GM10248 (cell line): ENCODE measurements at regions of chr21 and their contacts with region 1.

Region 1: DNA sequence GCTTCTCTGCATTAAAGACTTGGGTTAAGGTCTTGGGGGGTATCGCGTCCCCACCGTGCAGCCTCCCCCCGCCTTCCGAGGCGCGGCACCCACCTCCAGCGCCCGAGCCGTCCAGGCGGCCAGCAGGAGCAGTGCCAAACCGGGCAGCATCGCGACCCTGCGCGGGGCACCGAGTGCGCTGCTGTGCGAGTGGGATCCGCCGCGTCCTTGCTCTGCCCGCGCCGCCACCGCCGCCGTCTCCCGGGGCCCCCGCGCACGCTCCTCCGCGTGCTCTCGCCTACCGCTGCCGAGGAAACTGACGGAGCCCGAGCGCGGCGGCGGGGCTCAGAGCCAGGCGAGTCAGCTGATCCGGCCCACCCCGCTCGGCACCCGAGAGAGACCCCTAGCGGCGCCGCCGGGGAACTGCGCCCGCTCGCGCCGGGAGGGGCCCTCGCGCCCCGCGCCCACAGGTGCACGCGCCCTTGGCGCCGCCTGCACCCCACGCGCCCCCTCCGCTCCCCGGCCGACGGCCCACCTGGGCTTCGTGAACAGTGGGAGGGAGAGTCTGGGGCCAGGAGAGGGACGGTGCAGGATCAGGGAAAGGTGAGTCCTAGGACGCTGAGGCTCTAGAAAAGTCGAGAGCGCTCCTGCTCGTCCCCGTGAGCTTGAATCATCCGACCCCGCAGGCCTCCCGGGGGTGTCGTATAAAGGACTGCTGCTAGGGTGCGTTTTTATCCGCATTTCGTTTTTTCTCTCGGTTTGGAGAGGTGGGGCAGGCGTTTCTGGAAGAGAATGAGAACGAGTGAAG is at the start of gene APP:
- DNase-seq: peak; percentile 95
- CTCF ChIP-seq: peak; percentile 91

Region 2: DNA sequence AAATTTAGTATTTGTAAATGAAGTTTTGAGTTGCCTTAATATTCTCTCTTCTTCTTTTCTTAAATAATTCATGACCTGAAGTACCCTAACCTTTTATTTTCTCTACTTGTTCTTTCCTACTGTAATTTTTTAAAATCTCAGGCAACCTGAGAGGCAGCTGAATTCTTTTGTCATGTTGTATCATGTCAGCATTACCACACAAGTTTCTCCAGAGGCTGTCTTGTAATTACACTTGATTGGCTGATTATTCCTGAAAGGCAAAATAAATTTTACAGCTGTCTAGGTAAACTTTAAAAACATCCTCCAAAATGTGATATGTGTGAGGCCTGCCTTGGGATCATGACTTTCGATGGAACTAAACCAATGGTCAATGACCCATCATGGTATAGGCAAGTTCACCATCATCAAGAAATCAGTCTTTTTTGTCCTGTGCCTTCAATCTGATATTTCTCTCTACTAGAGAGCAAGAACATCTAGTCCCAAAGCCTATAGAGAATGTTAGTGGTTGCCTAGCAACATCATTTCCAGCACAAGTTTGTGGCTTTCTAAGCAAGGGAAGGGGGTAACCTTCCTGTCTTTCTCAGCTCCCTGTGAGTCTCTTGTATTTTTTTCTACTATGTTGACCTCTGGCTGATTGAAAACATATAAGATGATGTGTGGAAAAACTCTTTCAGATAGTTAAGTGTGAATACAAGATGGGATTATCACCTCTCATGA is 320.4 kb before region 1 on chr21:
- CTCF ChIA-PET with region 1: no interaction called
- POLR2A ChIA-PET with region 1: no interaction called
- DNase-seq: no peak
- CTCF ChIP-seq: no peak

Region 3: GRCh38 chr21:25881525-25882376 is 288.9 kb before region 1 on chr21:
- CTCF ChIA-PET with region 1: interaction called, 13 read pairs
- POLR2A ChIA-PET with region 1: no interaction called
- DNase-seq: peak; percentile 75
- CTCF ChIP-seq: peak; percentile 92

Region 4: DNA sequence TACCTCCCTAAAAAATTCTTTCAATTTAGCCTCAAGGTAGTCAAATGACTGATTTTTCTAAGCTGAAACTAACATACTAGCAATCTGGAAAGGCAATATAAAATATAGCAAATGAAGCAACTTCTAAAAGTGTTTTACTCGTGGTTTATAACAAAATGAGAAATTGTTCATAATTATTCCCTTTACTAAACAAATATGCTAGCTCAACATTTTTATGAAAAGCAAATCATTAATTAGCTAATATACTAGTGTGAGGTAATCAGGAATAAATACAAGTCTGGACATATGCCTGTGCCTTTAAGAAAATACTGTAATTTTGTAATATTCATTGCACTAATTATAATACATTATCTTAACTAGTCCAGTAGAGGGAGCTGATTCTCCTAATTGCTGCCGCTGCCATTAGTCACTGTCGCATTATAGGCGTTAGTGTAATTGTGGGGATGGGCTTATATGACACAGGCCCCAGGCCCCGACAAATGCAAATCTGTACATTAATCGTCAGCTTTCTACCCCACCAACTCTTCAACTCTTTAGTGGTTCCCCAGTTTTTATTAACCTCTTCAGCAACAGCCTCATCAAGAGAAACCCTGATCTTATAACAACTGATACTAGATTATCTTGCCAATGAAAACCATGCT is 275.0 kb before region 1 on chr21:
- CTCF ChIA-PET with region 1: interaction called, 21 read pairs
- POLR2A ChIA-PET with region 1: no interaction called
- DNase-seq: no peak
- CTCF ChIP-seq: peak; percentile 53

Region 5: GRCh38 chr21:26153758-26154157 is 16.9 kb before region 1 on chr21:
- CTCF ChIA-PET with region 1: interaction called, 30 read pairs
- POLR2A ChIA-PET with region 1: no interaction called
- DNase-seq: no peak
- CTCF ChIP-seq: no peak